H1 (cell line): ENCODE measurements at regions of chr11 and their contacts with region 1.

Region 1: GRCh38 chr11:57463671-57464538 is 3.6 kb downstream of the RTN4RL2 start:
- DNase-seq: no peak
- H3K4me3 ChIP-seq: peak overlapping the region in 1 of 4 experiments; percentile 33; a peak in 3 of 8 replicates
- H3K27ac ChIP-seq: no peak overlapping the region
- H3K4me1 ChIP-seq: peaks cover 5 to 53% (median 39%) of the 10 kb centered on the region in 4 experiments
- H3K27me3 ChIP-seq: peaks cover 8 to 18% (median 17%) of the 10 kb centered on the region in 4 experiments
- CTCF ChIP-seq: no peak
- EP300 ChIP-seq: no peak
- POLR2A ChIP-seq: no peak
- RAD21 ChIP-seq: no peak

Region 2: DNA sequence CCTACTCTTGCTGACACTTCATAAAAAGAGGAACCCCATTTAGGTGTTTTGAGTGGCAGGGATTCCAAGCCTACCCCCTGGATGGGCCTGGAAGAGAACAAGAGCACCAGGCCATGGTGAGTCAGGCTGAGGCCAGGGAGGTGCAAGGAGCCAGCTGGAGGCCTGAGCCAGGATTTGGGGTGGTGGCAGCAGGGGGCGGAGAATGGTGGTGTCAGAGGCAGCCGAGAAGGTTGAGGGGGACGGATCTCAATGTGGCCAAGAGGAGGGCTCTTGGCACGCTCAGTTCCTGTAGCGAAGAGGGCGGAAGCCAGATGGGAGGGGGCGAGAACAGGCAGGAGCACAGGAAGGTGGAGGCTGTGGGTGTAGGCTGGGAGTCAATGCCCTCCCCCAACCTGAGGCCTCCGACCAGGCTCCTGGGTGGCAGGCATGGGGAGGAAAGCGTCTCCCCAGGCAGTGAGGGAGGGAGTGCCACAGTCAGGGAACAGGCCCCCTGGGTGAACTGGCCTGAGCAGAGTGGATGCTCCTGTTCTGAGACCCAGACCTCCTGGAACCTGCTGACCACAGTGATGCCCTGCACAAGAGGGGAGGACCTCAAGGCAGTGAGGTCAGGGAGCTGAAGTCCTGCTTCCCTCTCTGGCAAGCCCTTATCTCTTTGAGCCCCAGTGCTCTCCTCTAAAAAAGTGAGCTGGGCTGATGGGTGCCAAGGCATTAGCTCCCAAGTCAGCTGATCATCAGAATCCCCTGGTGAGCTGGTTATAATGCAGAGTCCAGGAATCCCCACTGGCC is 10.3 kb after region 1 on chr11:
- CTCF ChIA-PET with region 1: interaction called, 452 read pairs
- POLR2A ChIA-PET with region 1: interaction called, 141 read pairs
- DNase-seq: no peak
- H3K4me3 ChIP-seq: no peak overlapping the region
- H3K27ac ChIP-seq: no peak overlapping the region
- H3K4me1 ChIP-seq: peaks cover 4 to 25% (median 13%) of the 10 kb centered on the region in 4 experiments
- H3K27me3 ChIP-seq: peaks cover 0 to 35% (median 22%) of the 10 kb centered on the region in 4 experiments; a peak in 6 of 7 replicates
- CTCF ChIP-seq: no peak
- EP300 ChIP-seq: no peak
- POLR2A ChIP-seq: no peak
- RAD21 ChIP-seq: no peak